Panc1 (cell line): ENCODE measurements at regions of chr11 and their contacts with region 1.

Region 1: DNA sequence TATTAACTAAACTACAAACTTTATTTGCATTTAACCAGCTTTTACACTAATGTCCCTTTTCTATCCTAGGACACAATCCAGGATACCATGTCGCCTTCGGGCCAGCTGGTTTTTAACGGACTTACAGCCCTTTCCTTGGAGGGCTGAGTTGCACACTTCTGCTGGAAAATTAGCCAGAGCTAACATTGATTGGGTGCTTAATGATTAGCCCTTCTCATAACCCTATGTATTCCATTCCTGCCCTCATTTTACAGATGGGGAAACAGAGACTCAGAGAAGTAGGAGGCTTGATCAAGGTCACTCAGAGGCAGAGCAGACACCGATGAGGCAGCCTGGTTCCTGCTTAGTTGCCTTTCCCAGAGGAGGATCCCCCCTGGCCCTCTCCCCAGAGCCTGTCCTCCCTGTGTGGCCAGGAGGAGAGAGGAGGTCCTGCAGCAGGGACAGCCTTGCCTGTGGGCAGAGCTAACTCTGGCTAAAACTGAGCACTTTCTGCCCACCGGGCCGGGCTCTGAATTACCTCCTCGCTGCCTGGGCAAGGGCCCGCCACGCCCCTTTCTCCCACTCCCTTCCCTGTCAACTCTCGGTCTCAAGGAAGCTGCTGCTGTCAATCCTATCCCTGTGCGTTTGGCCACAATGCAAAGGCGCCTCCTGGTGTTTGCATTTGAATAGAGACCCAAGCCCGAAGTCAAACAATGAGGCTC is 59.6 kb upstream of the PAX6 start:
- DNase-seq: peak; percentile 18
- ATAC-seq: peak; percentile 84
- H3K4me3 ChIP-seq: no peak overlapping the region
- H3K27ac ChIP-seq: no peak overlapping the region
- H3K4me1 ChIP-seq: peaks cover 9% of the 10 kb centered on the region; the same call in 1 of the 2 replicates
- H3K27me3 ChIP-seq: 0 out of 2 replicates have a peak, but pooled peaks cover 2% of the 10 kb centered on the region
- CTCF ChIP-seq: peak; percentile 87

Region 2: GRCh38 chr11:31240338-31240904 is 630.3 kb before region 1 on chr11:
- CTCF ChIA-PET with region 1: no interaction called
- POLR2A ChIA-PET with region 1: no interaction called
- in situ Hi-C with region 1: no loop called
- intact Hi-C with region 1: loop called (anchors 1 kb)
- DNase-seq: peak; percentile 18
- ATAC-seq: no peak
- H3K4me3 ChIP-seq: no peak overlapping the region
- H3K27ac ChIP-seq: no peak overlapping the region
- H3K4me1 ChIP-seq: no peaks in the 10 kb centered on the region
- H3K27me3 ChIP-seq: no peaks in the 10 kb centered on the region
- CTCF ChIP-seq: peak; percentile 71; the same call in 1 of the 2 replicates

Region 3: GRCh38 chr11:31397239-31397834 is 473.4 kb before region 1 on chr11:
- CTCF ChIA-PET with region 1: no interaction called
- POLR2A ChIA-PET with region 1: no interaction called
- in situ Hi-C with region 1: no loop called
- intact Hi-C with region 1: loop called (anchors 2 kb)
- DNase-seq: no peak
- ATAC-seq: no peak
- H3K4me3 ChIP-seq: no peak overlapping the region
- H3K27ac ChIP-seq: no peak overlapping the region
- H3K4me1 ChIP-seq: no peaks in the 10 kb centered on the region
- H3K27me3 ChIP-seq: no peaks in the 10 kb centered on the region
- CTCF ChIP-seq: peak; percentile 61; the same call in 1 of the 2 replicates

Region 4: GRCh38 chr11:31487848-31488247 is 382.9 kb before region 1 on chr11:
- CTCF ChIA-PET with region 1: no interaction called
- POLR2A ChIA-PET with region 1: no interaction called
- in situ Hi-C with region 1: no loop called
- intact Hi-C with region 1: loop called (anchors 5 kb)
- DNase-seq: no peak
- ATAC-seq: peak; percentile 66; the same call in 1 of the 2 replicates
- H3K4me3 ChIP-seq: no peak overlapping the region
- H3K27ac ChIP-seq: no peak overlapping the region
- H3K4me1 ChIP-seq: no peaks in the 10 kb centered on the region; the same call in 1 of the 2 replicates
- H3K27me3 ChIP-seq: no peaks in the 10 kb centered on the region
- CTCF ChIP-seq: peak; percentile 47; the same call in 1 of the 2 replicates

Region 5: GRCh38 chr11:31641477-31642062 is 229.2 kb before region 1 on chr11:
- CTCF ChIA-PET with region 1: interaction called, 8 read pairs
- POLR2A ChIA-PET with region 1: no interaction called
- in situ Hi-C with region 1: no loop called
- intact Hi-C with region 1: loop called (anchors 2 kb)
- DNase-seq: no peak
- ATAC-seq: no peak; the same call in 1 of the 2 replicates
- H3K4me3 ChIP-seq: no peak overlapping the region
- H3K27ac ChIP-seq: no peak overlapping the region
- H3K4me1 ChIP-seq: no peaks in the 10 kb centered on the region
- H3K27me3 ChIP-seq: no peaks in the 10 kb centered on the region
- CTCF ChIP-seq: peak; percentile 84

Region 6: DNA sequence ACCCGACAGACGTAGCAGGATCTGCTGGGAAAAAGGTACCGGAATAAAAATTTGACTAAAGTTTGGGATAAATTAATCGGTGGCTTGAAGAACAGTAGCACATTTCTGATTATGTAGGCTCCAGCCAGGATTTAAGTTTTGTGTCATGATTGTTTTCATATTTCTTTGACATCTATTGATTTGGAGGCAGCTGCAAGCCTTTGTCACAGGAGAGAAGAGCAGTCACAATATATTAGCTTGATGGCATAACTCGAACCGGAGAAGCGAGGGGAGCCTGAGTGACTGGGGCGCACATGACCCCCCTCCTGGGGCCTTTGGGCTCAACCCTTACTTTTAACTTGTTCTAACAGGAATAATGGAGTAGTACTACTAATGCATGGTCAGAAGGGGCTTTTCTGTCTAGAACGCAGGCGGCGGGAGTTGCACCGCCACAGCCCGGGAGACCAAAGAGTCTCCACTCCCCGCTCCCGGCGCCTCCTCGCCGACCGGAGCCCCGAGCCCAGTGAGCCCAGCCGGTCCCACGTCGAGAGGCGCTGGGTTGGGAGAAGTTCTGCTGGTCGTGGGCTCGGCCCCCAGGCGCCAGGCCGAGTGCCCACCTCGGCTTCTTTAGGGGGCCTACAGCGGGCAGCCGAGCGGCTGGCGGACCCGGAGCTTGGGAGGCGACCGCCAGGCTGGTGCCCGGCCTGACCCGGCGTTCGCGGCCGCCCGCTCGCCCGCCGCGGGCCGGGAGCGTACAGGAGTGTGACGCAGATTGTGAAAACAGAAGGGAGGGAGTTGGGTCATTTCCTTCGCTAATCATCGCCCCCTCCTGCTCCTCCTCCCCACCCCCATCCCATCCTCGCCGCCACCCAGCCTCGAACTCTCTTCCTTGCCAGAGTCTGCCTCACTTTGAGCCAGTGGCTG is 44.0 kb before region 1 on chr11:
- CTCF ChIA-PET with region 1: no interaction called
- POLR2A ChIA-PET with region 1: no interaction called
- in situ Hi-C with region 1: no loop called
- intact Hi-C with region 1: no loop called
- DNase-seq: no peak
- ATAC-seq: no peak
- H3K4me3 ChIP-seq: no peak overlapping the region
- H3K27ac ChIP-seq: no peak overlapping the region
- H3K4me1 ChIP-seq: no peaks in the 10 kb centered on the region
- H3K27me3 ChIP-seq: peaks cover 10% of the 10 kb centered on the region
- CTCF ChIP-seq: no peak